HCT116 (cell line): ENCODE measurements at regions of chr5 and their contacts with region 1.

Region 1: GRCh38 chr5:134527146-134527960 is 1.9 kb downstream of the JADE2 start:
- DNase-seq: no peak
- ATAC-seq: peak; percentile 70
- H3K4me3 ChIP-seq: peak overlapping the region; percentile 83 to 90
- H3K27ac ChIP-seq: peak overlapping the region; percentile 100
- H3K4me1 ChIP-seq: peaks cover 30 to 46% of the 10 kb centered on the region in 2 experiments
- H3K27me3 ChIP-seq: no peaks in the 10 kb centered on the region
- CTCF ChIP-seq: peak in 2 of 3 experiments; percentile 67 to 85; a peak in 4 of 6 replicates
- POLR2A ChIP-seq: no peak
- RAD21 ChIP-seq: no peak

Region 2: GRCh38 chr5:134370871-134371833 is 156.2 kb before region 1 on chr5 and contains the start of gene UBE2B:
- CTCF ChIA-PET with region 1: no interaction called
- POLR2A ChIA-PET with region 1: no interaction called
- RAD21 ChIA-PET with region 1: no interaction called
- intact Hi-C with region 1: loop called (anchors 1 kb)
- DNase-seq: peak; percentile 99
- ATAC-seq: peak; percentile 69
- H3K4me3 ChIP-seq: peak within 1 kb of the TSS; percentile 72 to 97
- H3K27ac ChIP-seq: peak within 1 kb of the TSS; percentile 73
- H3K4me1 ChIP-seq: peaks cover 14 to 26% of the 10 kb centered on the region in 2 experiments
- H3K27me3 ChIP-seq: no peaks in the 10 kb centered on the region
- CTCF ChIP-seq: no peak
- POLR2A ChIP-seq: peak; percentile 63
- RAD21 ChIP-seq: no peak
- total RNA-seq, gene UBE2B: 91.9 TPM

Region 3: GRCh38 chr5:134411546-134412266 is 115.6 kb before region 1 on chr5 and contains the start of gene CDKN2AIPNL:
- CTCF ChIA-PET with region 1: interaction called, 12 read pairs
- POLR2A ChIA-PET with region 1: no interaction called
- RAD21 ChIA-PET with region 1: interaction called in 1 of 2 experiments, 9 read pairs
- intact Hi-C with region 1: loop called (anchors 1 kb)
- DNase-seq: peak; percentile 60
- ATAC-seq: peak; percentile 99
- H3K4me3 ChIP-seq: peak within 1 kb of the TSS; percentile 70 to 98
- H3K27ac ChIP-seq: peak within 1 kb of the TSS; percentile 75
- H3K4me1 ChIP-seq: peaks cover 10 to 30% of the 10 kb centered on the region in 2 experiments
- H3K27me3 ChIP-seq: no peaks in the 10 kb centered on the region
- CTCF ChIP-seq: peak; percentile 67 to 72 (median 69)
- POLR2A ChIP-seq: peak; percentile 49
- RAD21 ChIP-seq: peak; percentile 80
- total RNA-seq, gene CDKN2AIPNL: 63.0 TPM

Region 4: DNA sequence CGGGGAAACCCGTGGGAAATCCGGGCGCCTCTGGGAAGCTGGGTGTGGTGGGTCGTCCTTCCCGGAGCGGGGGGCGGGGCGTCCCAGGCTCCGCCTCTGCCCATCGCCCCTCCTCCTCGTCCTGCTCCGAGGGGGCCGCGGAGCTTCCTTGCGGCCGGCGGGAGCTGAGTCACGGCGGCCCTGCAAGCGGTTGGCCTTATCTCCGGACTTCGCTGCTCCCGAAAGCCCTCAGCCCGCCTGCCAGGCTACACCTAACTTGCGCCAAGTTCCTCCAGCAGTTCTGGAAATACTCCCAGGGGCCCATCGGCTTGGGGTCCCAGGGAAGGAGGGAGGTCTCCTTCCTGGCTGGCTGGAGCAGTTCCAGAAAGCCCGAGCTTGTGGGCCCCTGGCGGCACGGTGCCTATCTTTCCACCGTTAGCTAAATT is 61.5 kb before region 1 on chr5:
- CTCF ChIA-PET with region 1: interaction called, 8 read pairs
- POLR2A ChIA-PET with region 1: interaction called, 8 read pairs
- RAD21 ChIA-PET with region 1: interaction called in 1 of 2 experiments, 4 read pairs
- intact Hi-C with region 1: loop called (anchors 2 kb)
- DNase-seq: peak; percentile 68
- ATAC-seq: peak; percentile 83
- H3K4me3 ChIP-seq: peak overlapping the region; percentile 62 to 69
- H3K27ac ChIP-seq: peak overlapping the region; percentile 99
- H3K4me1 ChIP-seq: peaks cover 16 to 30% of the 10 kb centered on the region in 2 experiments
- H3K27me3 ChIP-seq: no peaks in the 10 kb centered on the region
- CTCF ChIP-seq: 0 out of 6 replicates have a peak, but pooled peaks of 1 of the 3 experiments have one; percentile 3
- POLR2A ChIP-seq: peak; percentile 85
- RAD21 ChIP-seq: no peak

Region 5: DNA sequence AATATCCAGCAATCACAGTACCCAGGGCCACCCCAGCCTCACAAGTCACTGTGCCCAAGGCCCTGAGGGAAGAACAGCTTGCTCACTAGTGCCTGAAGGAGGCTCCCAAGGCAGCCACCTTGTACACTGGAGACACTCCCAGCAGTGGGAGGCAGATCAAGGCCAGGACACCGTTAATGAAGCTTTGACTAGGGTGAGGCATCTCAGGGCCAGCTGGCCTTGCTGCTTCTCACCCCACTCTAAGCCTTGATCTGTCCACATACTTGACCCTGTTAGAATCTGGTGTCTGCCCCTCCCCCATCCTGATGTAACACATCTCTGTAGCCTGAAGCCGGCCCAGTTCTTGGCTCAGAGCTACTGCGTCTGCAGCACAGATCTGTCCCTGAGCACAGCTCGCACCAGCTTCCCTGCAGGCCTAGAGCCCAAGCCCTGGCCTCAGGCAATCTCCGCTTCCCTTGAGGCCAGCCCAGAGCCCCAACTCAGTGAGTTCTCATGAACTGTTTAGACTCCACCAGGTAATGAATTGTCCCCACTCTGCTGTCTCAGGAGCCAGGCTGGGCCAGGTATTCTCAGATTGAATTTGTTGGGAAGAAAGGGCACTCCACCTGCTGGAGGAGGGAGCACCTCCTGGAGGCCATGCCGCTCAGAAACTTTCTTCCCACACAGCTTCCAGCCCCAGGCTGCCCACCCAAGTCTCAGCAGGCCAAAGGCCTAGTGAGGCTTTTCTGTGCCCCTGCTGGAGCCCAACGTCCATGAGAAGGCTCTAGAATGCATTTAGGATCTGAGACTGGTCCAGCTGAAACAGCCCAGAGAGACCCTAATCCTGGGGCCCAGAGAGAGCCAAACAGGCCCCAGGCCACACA is 15.3 kb before region 1 on chr5:
- CTCF ChIA-PET with region 1: interaction called, 13 read pairs
- POLR2A ChIA-PET with region 1: interaction called, 55 read pairs
- RAD21 ChIA-PET with region 1: interaction called, 4 to 5 read pairs
- intact Hi-C with region 1: no loop called
- DNase-seq: no peak
- ATAC-seq: peak; percentile 53
- H3K4me3 ChIP-seq: peak overlapping the region in 1 of 2 experiments; percentile 49; a peak in 3 of 4 replicates
- H3K27ac ChIP-seq: peak overlapping the region; percentile 98
- H3K4me1 ChIP-seq: peaks cover 67 to 78% of the 10 kb centered on the region in 2 experiments
- H3K27me3 ChIP-seq: no peaks in the 10 kb centered on the region
- CTCF ChIP-seq: peak in 2 of 3 experiments; percentile 45 to 54; a peak in 4 of 6 replicates
- POLR2A ChIP-seq: peak; percentile 42
- RAD21 ChIP-seq: no peak

Region 6: GRCh38 chr5:134577796-134578363 is 50.5 kb after region 1 on chr5:
- CTCF ChIA-PET with region 1: no interaction called
- POLR2A ChIA-PET with region 1: no interaction called
- RAD21 ChIA-PET with region 1: no interaction called
- intact Hi-C with region 1: loop called (anchors 5 kb)
- DNase-seq: peak; percentile 54
- ATAC-seq: peak; percentile 83
- H3K4me3 ChIP-seq: no peak overlapping the region
- H3K27ac ChIP-seq: no peak overlapping the region
- H3K4me1 ChIP-seq: peaks cover 0 to 11% of the 10 kb centered on the region in 2 experiments; a peak in 2 of 4 replicates
- H3K27me3 ChIP-seq: no peaks in the 10 kb centered on the region
- CTCF ChIP-seq: peak; percentile 83 to 89 (median 84)
- POLR2A ChIP-seq: no peak
- RAD21 ChIP-seq: peak; percentile 93

Region 7: DNA sequence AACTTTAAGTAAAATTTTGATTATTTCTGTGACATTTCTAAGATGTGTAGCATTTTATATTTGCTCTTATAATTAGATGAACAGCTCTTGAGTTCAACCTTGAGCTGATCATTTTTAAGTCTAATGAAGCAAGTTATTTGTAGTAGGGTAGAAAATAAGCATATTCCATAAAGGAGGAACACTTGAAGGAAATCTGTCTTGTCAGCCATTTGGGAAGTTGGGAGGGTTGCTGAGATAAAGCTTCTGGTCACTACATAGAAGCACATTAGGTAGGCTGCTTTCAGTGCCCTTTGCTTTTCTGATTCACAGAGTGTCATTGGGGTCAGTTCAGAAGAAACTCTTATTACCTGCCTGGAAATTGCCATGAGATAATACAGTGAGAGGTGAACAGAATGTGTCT is 165.4 kb after region 1 on chr5:
- CTCF ChIA-PET with region 1: no interaction called
- POLR2A ChIA-PET with region 1: no interaction called
- RAD21 ChIA-PET with region 1: no interaction called
- intact Hi-C with region 1: no loop called
- DNase-seq: no peak
- ATAC-seq: no peak
- H3K4me3 ChIP-seq: no peak overlapping the region
- H3K27ac ChIP-seq: no peak overlapping the region
- H3K4me1 ChIP-seq: no peaks in the 10 kb centered on the region
- H3K27me3 ChIP-seq: no peaks in the 10 kb centered on the region
- CTCF ChIP-seq: no peak
- POLR2A ChIP-seq: no peak
- RAD21 ChIP-seq: no peak